Right ventricle myocardium inferior (tissue), 1 donor: ENCODE measurements at regions of chr3 and their contacts with region 1.

Region 1: GRCh38 chr3:115147329-115148141 is 447 bp upstream of the ZBTB20 start:
- DNase-seq: peak; percentile 99
- ATAC-seq: peak; percentile 94

Region 2: GRCh38 chr3:114902691-114903101 is 244.8 kb before region 1 on chr3:
- intact Hi-C with region 1: no loop called
- DNase-seq: no peak
- ATAC-seq: no peak

Region 3: GRCh38 chr3:115099986-115100571 is 47.5 kb before region 1 on chr3:
- intact Hi-C with region 1: loop called (anchors 2 kb)
- DNase-seq: no peak
- ATAC-seq: peak; percentile 89

Region 4: GRCh38 chr3:115113367-115113766 is 34.2 kb before region 1 on chr3:
- intact Hi-C with region 1: no loop called
- DNase-seq: no peak
- ATAC-seq: peak; percentile 84